Heart right ventricle (tissue), 16 donors: ENCODE measurements at regions of chr9 and their contacts with region 1.

Region 1: GRCh38 chr9:27749838-27750237 is 176.6 kb upstream of the C9orf72 start:
- DNase-seq: no peak
- ATAC-seq: no peak
- H3K4me3 ChIP-seq: no peak overlapping the region
- H3K27ac ChIP-seq: no peak overlapping the region
- H3K4me1 ChIP-seq: no peaks in the 10 kb centered on the region
- H3K27me3 ChIP-seq: peaks cover 0 to 7% (median 0%) of the 10 kb centered on the region in 7 donors
- CTCF ChIP-seq: no peak

Region 2: DNA sequence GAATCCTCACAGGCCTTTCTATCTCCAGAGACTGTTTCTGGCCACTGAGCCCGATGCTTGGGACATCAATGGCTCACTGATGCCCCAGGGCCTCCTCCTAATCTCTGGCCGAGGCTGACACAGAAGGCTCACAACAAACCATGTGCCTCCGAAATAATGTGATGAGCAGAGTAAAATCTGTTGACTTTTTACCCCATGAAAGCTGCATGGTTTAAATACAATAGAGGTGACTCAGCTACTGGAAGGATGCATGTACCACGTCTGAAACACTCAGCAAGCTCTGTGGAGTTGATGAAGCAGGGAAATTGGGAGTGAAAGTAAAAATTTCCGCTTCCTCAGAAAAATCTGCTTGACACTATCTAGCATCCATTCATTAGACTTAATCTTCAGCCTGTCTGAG is 341.9 kb before region 1 on chr9:
- intact Hi-C with region 1: no loop called
- DNase-seq: no peak
- ATAC-seq: peak in 1 of 8 donors; percentile 15
- H3K4me3 ChIP-seq: no peak overlapping the region
- H3K27ac ChIP-seq: no peak overlapping the region
- H3K4me1 ChIP-seq: peaks cover 0 to 24% (median 17%) of the 10 kb centered on the region in 9 donors
- H3K27me3 ChIP-seq: no peaks in the 10 kb centered on the region
- CTCF ChIP-seq: no peak

Region 3: GRCh38 chr9:27701587-27701986 is 48.3 kb before region 1 on chr9:
- intact Hi-C with region 1: no loop called
- DNase-seq: peak in 1 of 2 donors; percentile 40
- ATAC-seq: peak; percentile 55 to 89 (median 84)
- H3K4me3 ChIP-seq: no peak overlapping the region
- H3K27ac ChIP-seq: peak overlapping the region in 2 of 10 donors; percentile 9 to 90
- H3K4me1 ChIP-seq: peaks cover 0 to 27% (median 0%) of the 10 kb centered on the region in 9 donors
- H3K27me3 ChIP-seq: no peaks in the 10 kb centered on the region
- CTCF ChIP-seq: no peak

Region 4: GRCh38 chr9:27771803-27772545 is 22.1 kb after region 1 on chr9:
- intact Hi-C with region 1: loop called in 1 of 10 experiments (anchors 2 kb)
- DNase-seq: peak in 1 of 2 donors; percentile 9
- ATAC-seq: peak in 4 of 8 donors; percentile 35 to 78 (median 46)
- H3K4me3 ChIP-seq: no peak overlapping the region
- H3K27ac ChIP-seq: no peak overlapping the region
- H3K4me1 ChIP-seq: no peaks in the 10 kb centered on the region
- H3K27me3 ChIP-seq: no peaks in the 10 kb centered on the region
- CTCF ChIP-seq: no peak

Region 5: GRCh38 chr9:27787891-27788290 is 38.1 kb after region 1 on chr9:
- intact Hi-C with region 1: no loop called
- DNase-seq: no peak
- ATAC-seq: no peak
- H3K4me3 ChIP-seq: no peak overlapping the region
- H3K27ac ChIP-seq: no peak overlapping the region
- H3K4me1 ChIP-seq: no peaks in the 10 kb centered on the region
- H3K27me3 ChIP-seq: no peaks in the 10 kb centered on the region
- CTCF ChIP-seq: peak in 1 of 9 donors; percentile 30

Region 6: DNA sequence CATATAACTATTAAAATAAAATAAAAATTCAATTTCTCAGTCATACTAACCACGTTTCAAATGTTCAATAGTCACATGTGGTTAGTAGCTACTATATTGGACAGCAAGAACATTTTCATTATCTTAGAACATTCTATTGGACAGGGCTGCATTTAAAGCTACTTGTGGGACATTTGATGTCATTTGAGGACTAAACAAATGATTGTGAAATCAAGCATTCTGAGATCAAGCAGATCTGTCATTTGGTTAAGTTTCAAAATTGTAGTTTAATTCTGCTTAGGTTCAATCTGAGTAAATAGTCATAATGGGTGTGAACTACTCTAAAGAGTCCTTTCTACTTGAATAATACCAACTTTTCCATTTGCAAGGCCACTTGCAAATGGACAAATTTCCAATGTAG is 50.3 kb after region 1 on chr9:
- intact Hi-C with region 1: loop called in 1 of 10 experiments (anchors 10 kb)
- DNase-seq: no peak
- ATAC-seq: no peak
- H3K4me3 ChIP-seq: no peak overlapping the region
- H3K27ac ChIP-seq: no peak overlapping the region
- H3K4me1 ChIP-seq: no peaks in the 10 kb centered on the region
- H3K27me3 ChIP-seq: no peaks in the 10 kb centered on the region
- CTCF ChIP-seq: no peak